ENCODE measurements at regions of chr2 and their contacts with region 1.

Region 1: GRCh38 chr2:227766373-227766883 is 20.7 kb downstream of the SCYGR8 start:
- DNase-seq: peak; percentile 83
- ATAC-seq: peak; percentile 98
- H3K4me3 ChIP-seq: peak overlapping the region in 1 of 3 experiments; percentile 8; a peak in 1 of 6 replicates
- H3K27ac ChIP-seq: no peak overlapping the region
- H3K4me1 ChIP-seq: peaks cover 56% of the 10 kb centered on the region
- H3K27me3 ChIP-seq: no peaks in the 10 kb centered on the region
- CTCF ChIP-seq: peak; percentile 99
- EP300 ChIP-seq: peak in 1 of 2 experiments; percentile 38; a peak in 1 of 4 replicates
- POLR2A ChIP-seq: no peak
- RAD21 ChIP-seq: peak; percentile 98

Region 2: DNA sequence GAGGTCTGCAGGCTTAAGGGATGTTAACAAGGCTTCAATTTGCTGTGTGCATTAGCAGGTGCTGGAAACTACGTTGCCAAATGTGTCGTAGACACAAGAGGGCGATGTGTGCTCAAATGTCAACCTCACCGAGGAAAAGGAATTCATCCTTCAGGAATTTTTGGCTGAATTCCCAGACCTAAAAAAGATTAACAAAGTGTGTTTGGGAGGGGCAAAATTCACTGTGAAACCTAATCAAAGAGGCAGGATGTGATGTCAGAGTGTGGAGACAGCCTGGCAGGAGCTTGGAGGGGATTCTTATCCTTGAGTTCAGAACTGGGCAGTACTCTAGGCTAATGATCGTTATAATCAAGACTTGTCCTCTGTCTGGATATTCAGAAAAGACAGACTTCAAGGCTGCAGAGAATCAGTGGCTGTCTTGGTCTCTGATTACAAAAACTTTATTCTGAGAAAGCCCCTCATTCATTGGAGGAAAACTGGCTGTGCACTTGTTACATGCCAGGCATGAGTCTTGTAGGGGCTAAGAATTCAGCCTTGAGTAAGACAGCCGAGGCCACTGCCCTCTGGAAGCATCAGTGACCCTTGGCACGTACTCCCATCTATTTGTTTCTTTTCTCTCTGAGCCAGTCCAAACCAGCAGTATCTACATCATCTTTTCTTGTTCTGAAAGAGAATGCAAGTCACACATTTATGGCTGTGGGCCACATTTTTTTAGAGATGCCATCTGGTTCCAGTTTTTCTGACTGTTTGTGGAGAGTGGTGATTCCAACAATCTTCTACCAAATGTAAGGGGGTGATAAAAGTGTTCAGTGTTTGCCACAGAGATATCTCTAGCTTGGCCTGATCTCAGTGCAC is 360.0 kb before region 1 on chr2:
- CTCF ChIA-PET with region 1: interaction called, 12 read pairs
- POLR2A ChIA-PET with region 1: interaction called, 6 read pairs
- in situ Hi-C with region 1: loop called (anchors 5 kb)
- intact Hi-C with region 1: loop called (anchors 1 kb)
- DNase-seq: peak; percentile 99
- ATAC-seq: peak; percentile 93
- H3K4me3 ChIP-seq: peak overlapping the region in 2 of 3 experiments; percentile 2 to 24; a peak in 1 of 6 replicates
- H3K27ac ChIP-seq: peak overlapping the region; percentile 51
- H3K4me1 ChIP-seq: peaks cover 20% of the 10 kb centered on the region
- H3K27me3 ChIP-seq: peaks cover 0 to 4% of the 10 kb centered on the region in 2 experiments; a peak in 1 of 5 replicates
- CTCF ChIP-seq: peak; percentile 98
- EP300 ChIP-seq: peak in 1 of 2 experiments; percentile 82; a peak in 2 of 4 replicates
- POLR2A ChIP-seq: peak in 1 of 2 experiments; percentile 29; a peak in 1 of 4 replicates
- RAD21 ChIP-seq: peak; percentile 97

Region 3: GRCh38 chr2:227566012-227566411 is 200.4 kb before region 1 on chr2:
- CTCF ChIA-PET with region 1: no interaction called
- POLR2A ChIA-PET with region 1: no interaction called
- in situ Hi-C with region 1: no loop called
- intact Hi-C with region 1: loop called (anchors 10 kb)
- DNase-seq: no peak
- ATAC-seq: peak; percentile 40
- H3K4me3 ChIP-seq: no peak overlapping the region
- H3K27ac ChIP-seq: no peak overlapping the region
- H3K4me1 ChIP-seq: peaks cover 10% of the 10 kb centered on the region
- H3K27me3 ChIP-seq: no peaks in the 10 kb centered on the region
- CTCF ChIP-seq: no peak
- EP300 ChIP-seq: no peak
- POLR2A ChIP-seq: no peak
- RAD21 ChIP-seq: no peak

Region 4: GRCh38 chr2:227655454-227655853 is 111.0 kb before region 1 on chr2:
- CTCF ChIA-PET with region 1: interaction called, 29 read pairs
- POLR2A ChIA-PET with region 1: interaction called, 3 read pairs
- in situ Hi-C with region 1: loop called (anchors 5 kb)
- intact Hi-C with region 1: loop called (anchors 1 kb)
- DNase-seq: peak; percentile 87
- ATAC-seq: peak; percentile 70
- H3K4me3 ChIP-seq: no peak overlapping the region
- H3K27ac ChIP-seq: no peak overlapping the region
- H3K4me1 ChIP-seq: peaks cover 46% of the 10 kb centered on the region
- H3K27me3 ChIP-seq: no peaks in the 10 kb centered on the region
- CTCF ChIP-seq: no peak
- EP300 ChIP-seq: peak in 1 of 2 experiments; percentile 57; a peak in 2 of 4 replicates
- POLR2A ChIP-seq: no peak
- RAD21 ChIP-seq: no peak

Region 5: GRCh38 chr2:227748079-227748478 is 18.3 kb before region 1 on chr2:
- CTCF ChIA-PET with region 1: interaction called, 4 read pairs
- POLR2A ChIA-PET with region 1: no interaction called
- in situ Hi-C with region 1: no loop called
- intact Hi-C with region 1: loop called (anchors 1 kb)
- DNase-seq: peak; percentile 63
- ATAC-seq: peak; percentile 89
- H3K4me3 ChIP-seq: no peak overlapping the region
- H3K27ac ChIP-seq: no peak overlapping the region
- H3K4me1 ChIP-seq: peaks cover 28% of the 10 kb centered on the region
- H3K27me3 ChIP-seq: peaks cover 0 to 9% of the 10 kb centered on the region in 2 experiments; a peak in 2 of 5 replicates
- CTCF ChIP-seq: peak; percentile 72
- EP300 ChIP-seq: no peak
- POLR2A ChIP-seq: no peak
- RAD21 ChIP-seq: peak; percentile 44; the same call in 1 of the 2 replicates

Region 6: DNA sequence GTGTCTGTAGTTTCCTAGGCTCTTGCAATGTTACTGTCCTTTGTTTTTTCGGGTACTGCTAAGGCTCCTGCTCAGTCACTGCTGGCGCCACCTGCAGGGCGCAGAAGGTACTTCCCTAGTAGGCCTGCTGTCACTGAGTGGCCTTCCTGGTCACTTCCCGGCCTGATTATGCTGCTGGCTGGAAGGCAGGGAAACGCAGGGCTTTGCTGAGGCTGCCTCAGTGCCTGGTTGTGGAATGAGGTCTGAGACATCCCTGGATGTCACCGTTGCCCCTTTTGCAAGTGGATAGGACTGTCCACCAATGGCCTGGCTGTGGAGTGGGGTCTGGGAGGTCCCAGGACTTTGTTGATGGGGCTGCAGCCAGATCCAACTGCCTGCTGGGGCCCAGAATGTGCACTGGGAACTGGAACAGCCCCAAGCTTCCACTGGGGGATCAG is 118.1 kb after region 1 on chr2:
- CTCF ChIA-PET with region 1: interaction called, 11 read pairs
- POLR2A ChIA-PET with region 1: no interaction called
- in situ Hi-C with region 1: no loop called
- intact Hi-C with region 1: no loop called
- DNase-seq: peak; percentile 75
- ATAC-seq: peak; percentile 100
- H3K4me3 ChIP-seq: no peak overlapping the region; a peak in 1 of 6 replicates
- H3K27ac ChIP-seq: no peak overlapping the region
- H3K4me1 ChIP-seq: peaks cover 20% of the 10 kb centered on the region; the same call in 1 of the 2 replicates
- H3K27me3 ChIP-seq: no peaks in the 10 kb centered on the region; a peak in 1 of 5 replicates
- CTCF ChIP-seq: peak; percentile 99
- EP300 ChIP-seq: no peak
- POLR2A ChIP-seq: no peak
- RAD21 ChIP-seq: peak; percentile 80

Region 7: GRCh38 chr2:228731517-228731916 is 965.1 kb after region 1 on chr2:
- CTCF ChIA-PET with region 1: no interaction called
- POLR2A ChIA-PET with region 1: no interaction called
- in situ Hi-C with region 1: no loop called
- intact Hi-C with region 1: no loop called
- DNase-seq: no peak
- ATAC-seq: no peak
- H3K4me3 ChIP-seq: no peak overlapping the region
- H3K27ac ChIP-seq: no peak overlapping the region
- H3K4me1 ChIP-seq: no peaks in the 10 kb centered on the region
- H3K27me3 ChIP-seq: no peaks in the 10 kb centered on the region
- CTCF ChIP-seq: no peak
- EP300 ChIP-seq: no peak
- POLR2A ChIP-seq: no peak
- RAD21 ChIP-seq: no peak